SK-N-SH (cell line): ENCODE measurements at regions of chr15 and their contacts with region 1.

Region 1: GRCh38 chr15:74545880-74546656 is 5.0 kb downstream of the ARID3B start:
- DNase-seq: peak; percentile 94
- H3K4me3 ChIP-seq: peak overlapping the region in 1 of 2 experiments; percentile 9; a peak in 1 of 4 replicates
- H3K27ac ChIP-seq: peak overlapping the region; percentile 35 to 77; a peak in 3 of 4 replicates
- H3K4me1 ChIP-seq: peaks cover 13 to 26% of the 10 kb centered on the region in 2 experiments
- H3K27me3 ChIP-seq: no peaks in the 10 kb centered on the region
- CTCF ChIP-seq: no peak
- EP300 ChIP-seq: peak; percentile 80 to 85; a peak in 3 of 4 replicates
- RAD21 ChIP-seq: peak; percentile 43

Region 2: GRCh38 chr15:74571191-74571590 is 25.1 kb after region 1 on chr15:
- CTCF ChIA-PET with region 1: interaction called, 12 read pairs
- POLR2A ChIA-PET with region 1: interaction called, 6 read pairs
- DNase-seq: no peak
- H3K4me3 ChIP-seq: no peak overlapping the region
- H3K27ac ChIP-seq: peak overlapping the region in 1 of 2 experiments; percentile 91; a peak in 2 of 4 replicates
- H3K4me1 ChIP-seq: peaks cover 4 to 43% of the 10 kb centered on the region in 2 experiments; a peak in 3 of 4 replicates
- H3K27me3 ChIP-seq: no peaks in the 10 kb centered on the region
- CTCF ChIP-seq: no peak
- EP300 ChIP-seq: no peak
- RAD21 ChIP-seq: no peak

Region 3: GRCh38 chr15:74610302-74610951 is 64.4 kb after region 1 on chr15:
- CTCF ChIA-PET with region 1: interaction called, 15 read pairs
- POLR2A ChIA-PET with region 1: interaction called, 33 read pairs
- DNase-seq: peak; percentile 85
- H3K4me3 ChIP-seq: no peak overlapping the region
- H3K27ac ChIP-seq: peak overlapping the region in 1 of 2 experiments; percentile 84; a peak in 2 of 4 replicates
- H3K4me1 ChIP-seq: peaks cover 0 to 33% of the 10 kb centered on the region in 2 experiments; a peak in 2 of 4 replicates
- H3K27me3 ChIP-seq: no peaks in the 10 kb centered on the region
- CTCF ChIP-seq: no peak
- EP300 ChIP-seq: peak in 1 of 2 experiments; percentile 72; a peak in 2 of 4 replicates
- RAD21 ChIP-seq: 0 out of 2 replicates have a peak, but pooled peaks have one; percentile 5

Region 4: GRCh38 chr15:74615508-74616365 is 69.7 kb after region 1 on chr15 and contains the start of gene CLK3:
- CTCF ChIA-PET with region 1: interaction called, 15 read pairs
- POLR2A ChIA-PET with region 1: interaction called, 33 read pairs
- DNase-seq: peak; percentile 99
- H3K4me3 ChIP-seq: peak within 1 kb of the TSS; percentile 98 to 99
- H3K27ac ChIP-seq: peak within 1 kb of the TSS; percentile 92 to 95
- H3K4me1 ChIP-seq: peaks cover 0 to 28% of the 10 kb centered on the region in 2 experiments; a peak in 2 of 4 replicates
- H3K27me3 ChIP-seq: no peaks in the 10 kb centered on the region
- CTCF ChIP-seq: no peak
- EP300 ChIP-seq: peak in 1 of 2 experiments; percentile 49; a peak in 1 of 4 replicates
- RAD21 ChIP-seq: no peak
- polyA plus RNA-seq, gene CLK3: 67.7 and 72.4 TPM in 2 replicates